Psoas muscle (tissue), 8 donors: ENCODE measurements at regions of chr22 and their contacts with region 1.

Region 1: DNA sequence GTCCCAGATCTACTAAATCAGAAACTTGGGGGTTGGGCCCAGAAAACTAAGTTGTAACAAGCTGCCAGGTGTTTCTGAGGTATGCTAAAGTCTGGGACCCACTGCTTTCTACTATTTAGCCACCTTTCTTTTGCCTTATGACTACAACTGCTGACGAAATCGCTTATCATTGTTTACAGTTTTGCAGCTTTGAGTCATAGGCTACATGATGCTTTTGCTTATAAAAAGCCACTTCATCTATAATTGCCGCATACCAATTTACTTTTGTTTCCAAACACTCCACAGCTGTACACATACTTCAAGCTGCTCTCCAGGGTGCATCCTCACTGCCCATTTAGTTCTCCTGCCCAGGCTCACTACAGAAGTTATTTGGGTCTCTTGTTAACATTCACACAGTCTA is 144.7 kb downstream of the ENTHD1 start:
- DNase-seq: no peak
- ATAC-seq: no peak
- H3K4me3 ChIP-seq: no peak overlapping the region
- H3K27ac ChIP-seq: no peak overlapping the region
- H3K4me1 ChIP-seq: no peaks in the 10 kb centered on the region
- H3K27me3 ChIP-seq: peaks cover 0 to 25% (median 2%) of the 10 kb centered on the region in 3 donors
- CTCF ChIP-seq: no peak

Region 2: GRCh38 chr22:39707816-39708215 is 41.1 kb before region 1 on chr22:
- intact Hi-C with region 1: loop called in 1 of 2 experiments (anchors 2 kb)
- DNase-seq: no peak
- ATAC-seq: no peak
- H3K4me3 ChIP-seq: no peak overlapping the region
- H3K27ac ChIP-seq: no peak overlapping the region
- H3K4me1 ChIP-seq: peaks cover 16% of the 10 kb centered on the region
- H3K27me3 ChIP-seq: peaks cover 0 to 7% (median 0%) of the 10 kb centered on the region in 3 donors
- CTCF ChIP-seq: no peak